ENCODE measurements at regions of chr17 and their contacts with region 1.

Region 1: GRCh38 chr17:18921912-18922451 is 30.0 kb upstream of the SLC5A10 start:
- DNase-seq: no peak
- H3K4me3 Mint-ChIP-seq: peak overlapping the region; percentile 63
- H3K27ac Mint-ChIP-seq: peak overlapping the region; percentile 89
- H3K4me1 Mint-ChIP-seq: peaks cover 54% of the 10 kb centered on the region
- H3K27me3 Mint-ChIP-seq: no peaks in the 10 kb centered on the region

Region 2: GRCh38 chr17:18860161-18860972 is 61.6 kb before region 1 on chr17:
- intact Hi-C with region 1: loop called (anchors 1 kb)
- DNase-seq: no peak
- H3K4me3 Mint-ChIP-seq: peak overlapping the region; percentile 68
- H3K27ac Mint-ChIP-seq: peak overlapping the region; percentile 92
- H3K4me1 Mint-ChIP-seq: peaks cover 36% of the 10 kb centered on the region
- H3K27me3 Mint-ChIP-seq: no peaks in the 10 kb centered on the region

Region 3: GRCh38 chr17:18896146-18896545 is 25.8 kb before region 1 on chr17:
- intact Hi-C with region 1: loop called (anchors 1 kb)
- DNase-seq: no peak
- H3K4me3 Mint-ChIP-seq: no peak overlapping the region
- H3K27ac Mint-ChIP-seq: no peak overlapping the region
- H3K4me1 Mint-ChIP-seq: peaks cover 24% of the 10 kb centered on the region
- H3K27me3 Mint-ChIP-seq: no peaks in the 10 kb centered on the region

Measured in activated T-helper 2 cell treated with anti-CD3 and anti-CD28 coated beads, Interferon-gamma antibody, Interleukin-2, Interleukin-4, amounts not matched to agents 10 μg/mL and 5 μg/mL and 100 μg/mL, durations not matched to agents 14 hours and 24 hours and 36 hours (primary cell).